ENCODE measurements at regions of chr1 and their contacts with region 1.

Region 1: DNA sequence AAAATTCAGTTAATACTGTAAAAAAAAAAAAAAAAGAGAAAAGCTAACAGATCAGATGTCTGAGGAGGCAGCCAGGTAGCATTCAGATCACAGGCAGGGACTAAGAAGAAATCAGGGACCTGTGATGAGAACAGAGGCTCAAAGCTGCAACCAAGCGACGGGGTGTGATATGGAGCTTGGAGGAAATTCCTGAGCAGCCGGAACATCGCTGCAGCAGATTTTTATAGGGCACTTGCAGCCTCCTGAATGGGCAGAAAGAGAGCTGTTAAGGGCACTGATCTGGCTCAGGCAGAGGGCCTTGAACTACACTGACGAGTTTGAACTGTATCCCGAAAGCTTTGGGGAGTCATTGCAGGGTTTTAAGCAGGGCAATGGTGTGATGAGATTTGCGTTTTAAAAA is 315.4 kb downstream of the ADGRL2 start:
- DNase-seq: no peak
- ATAC-seq: no peak
- H3K4me3 ChIP-seq: no peak overlapping the region
- H3K4me3 Mint-ChIP-seq: no peak overlapping the region
- H3K27ac ChIP-seq: no peak overlapping the region
- H3K27ac Mint-ChIP-seq: no peak overlapping the region
- H3K4me1 ChIP-seq: no peaks in the 10 kb centered on the region
- H3K4me1 Mint-ChIP-seq: no peaks in the 10 kb centered on the region
- H3K27me3 ChIP-seq: no peaks in the 10 kb centered on the region
- H3K27me3 Mint-ChIP-seq: no peaks in the 10 kb centered on the region
- CTCF ChIP-seq: no peak

Region 2: DNA sequence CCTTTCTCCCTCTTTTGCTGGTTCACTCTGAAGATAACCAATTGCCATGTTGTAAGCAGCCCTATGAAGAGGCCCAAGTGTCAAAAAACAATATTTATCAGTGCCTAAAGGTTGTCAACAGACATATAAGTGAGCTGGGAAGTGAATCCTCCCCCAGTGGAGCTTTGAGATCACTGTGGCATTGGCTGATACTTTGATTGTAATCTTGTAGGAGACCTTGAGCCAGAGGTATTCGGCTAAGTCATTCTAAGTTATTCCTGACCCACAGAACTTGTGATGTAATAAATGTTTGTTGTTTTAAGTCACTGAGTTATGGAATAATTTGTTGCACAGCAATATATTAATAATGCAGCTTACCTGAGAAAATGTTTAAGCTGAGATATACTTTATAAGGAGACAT is 1419.6 kb before region 1 on chr1:
- CTCF ChIA-PET with region 1: no interaction called
- POLR2A ChIA-PET with region 1: no interaction called
- intact Hi-C with region 1: loop called in 1 of 2 experiments (anchors 5 kb)
- DNase-seq: no peak
- ATAC-seq: no peak
- H3K4me3 ChIP-seq: no peak overlapping the region
- H3K4me3 Mint-ChIP-seq: no peak overlapping the region
- H3K27ac ChIP-seq: no peak overlapping the region
- H3K27ac Mint-ChIP-seq: no peak overlapping the region
- H3K4me1 ChIP-seq: no peaks in the 10 kb centered on the region
- H3K4me1 Mint-ChIP-seq: no peaks in the 10 kb centered on the region
- H3K27me3 ChIP-seq: no peaks in the 10 kb centered on the region
- H3K27me3 Mint-ChIP-seq: no peaks in the 10 kb centered on the region
- CTCF ChIP-seq: no peak

Region 3: GRCh38 chr1:82090104-82090503 is 26.0 kb before region 1 on chr1:
- CTCF ChIA-PET with region 1: no interaction called
- POLR2A ChIA-PET with region 1: no interaction called
- intact Hi-C with region 1: no loop called
- DNase-seq: no peak
- ATAC-seq: no peak
- H3K4me3 ChIP-seq: no peak overlapping the region
- H3K4me3 Mint-ChIP-seq: no peak overlapping the region
- H3K27ac ChIP-seq: no peak overlapping the region
- H3K27ac Mint-ChIP-seq: no peak overlapping the region
- H3K4me1 ChIP-seq: no peaks in the 10 kb centered on the region
- H3K4me1 Mint-ChIP-seq: no peaks in the 10 kb centered on the region
- H3K27me3 ChIP-seq: no peaks in the 10 kb centered on the region
- H3K27me3 Mint-ChIP-seq: no peaks in the 10 kb centered on the region
- CTCF ChIP-seq: no peak

Measured in CD8-positive, alpha-beta T cell (primary cell).